Activated CD4-positive, alpha-beta memory T cell treated with anti-CD3 and anti-CD28 coated beads, Interleukin-2, amount 10 ng/mL, durations not matched to agents 7 days and 5 days (primary cell): ENCODE measurements at regions of chr12 and their contacts with region 1.

Region 1: DNA sequence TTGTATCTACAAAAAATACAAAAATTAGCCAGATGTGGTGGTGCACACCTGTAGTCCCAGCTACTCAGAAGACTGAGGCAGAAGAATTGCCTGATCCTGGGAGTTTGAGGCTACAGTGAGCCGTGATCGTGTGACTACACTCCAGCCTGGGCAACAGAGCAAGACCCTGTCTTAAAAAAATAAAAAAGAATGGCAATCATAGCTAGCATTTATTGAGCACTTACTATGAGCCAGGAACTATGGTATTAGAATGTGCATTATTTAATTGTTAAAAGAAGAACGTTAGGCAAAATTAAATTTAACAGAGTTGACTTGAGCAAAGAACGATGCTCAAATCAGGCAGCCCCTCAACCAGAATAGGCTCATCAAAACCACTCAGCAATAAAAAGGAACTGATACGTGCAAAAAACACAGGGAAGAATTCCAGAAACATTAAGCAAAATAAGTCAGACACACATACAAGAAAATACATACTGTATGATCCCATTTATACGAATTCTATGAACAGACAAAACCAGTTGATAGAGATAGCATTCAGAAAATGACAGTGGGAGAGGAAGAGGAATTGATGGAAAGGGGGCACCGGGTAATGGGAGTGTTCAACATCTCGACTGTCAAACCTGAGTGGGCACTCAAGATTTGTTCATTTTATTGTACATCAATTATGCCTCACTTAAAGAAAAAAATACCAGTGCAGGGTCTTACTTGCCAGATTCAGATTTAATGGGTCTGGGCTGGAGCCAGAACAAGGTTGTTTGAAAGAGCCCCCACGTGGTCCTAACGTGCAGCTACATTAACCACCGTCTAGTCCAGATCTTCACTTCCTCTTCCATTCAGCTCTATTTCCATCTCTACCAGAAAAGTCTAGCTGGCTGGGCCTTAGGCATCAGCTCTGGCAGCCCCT is 8.0 kb downstream of the SCNN1A start:
- DNase-seq: peak; percentile 45
- H3K4me3 Mint-ChIP-seq: no peak overlapping the region
- H3K27ac Mint-ChIP-seq: peak overlapping the region; percentile 26
- H3K4me1 Mint-ChIP-seq: peaks cover 33% of the 10 kb centered on the region
- H3K27me3 Mint-ChIP-seq: no peaks in the 10 kb centered on the region

Region 2: DNA sequence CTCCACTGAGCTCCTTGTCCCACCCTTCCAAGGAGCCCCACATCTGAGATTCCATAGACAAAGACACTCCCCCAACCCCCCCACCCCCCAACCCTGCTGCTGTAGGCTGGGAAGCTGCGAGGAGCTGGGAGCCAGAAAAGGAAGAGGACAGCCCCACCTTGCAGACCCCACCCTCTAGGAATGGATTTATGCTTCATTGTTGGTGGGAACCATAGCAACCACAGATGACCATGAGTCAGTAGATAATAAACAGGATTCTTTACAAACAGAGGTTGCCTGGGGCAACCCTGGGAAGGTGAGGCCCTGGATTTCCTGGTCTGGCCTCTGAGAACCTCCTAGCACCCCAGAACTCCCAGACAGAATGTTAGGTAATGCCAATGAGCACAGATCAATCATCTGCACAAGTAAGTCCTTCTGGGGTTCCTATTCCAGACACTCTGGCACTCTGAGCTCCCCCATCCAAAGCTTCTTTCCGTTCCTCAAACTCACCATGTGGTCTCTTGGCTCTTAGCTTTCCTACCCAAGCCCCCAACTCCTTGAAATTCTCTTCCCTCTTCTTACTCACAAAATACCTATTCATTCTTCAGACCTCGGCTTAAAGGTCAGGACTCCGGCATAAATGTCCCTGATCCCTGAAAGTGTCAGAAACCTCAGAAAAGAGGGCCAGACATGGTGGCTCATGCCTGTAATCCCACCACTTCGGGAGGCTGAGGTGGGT is 72.1 kb before region 1 on chr12:
- CTCF ChIA-PET with region 1: no interaction called
- POLR2A ChIA-PET with region 1: no interaction called
- DNase-seq: no peak
- H3K4me3 Mint-ChIP-seq: no peak overlapping the region
- H3K27ac Mint-ChIP-seq: no peak overlapping the region
- H3K4me1 Mint-ChIP-seq: no peaks in the 10 kb centered on the region
- H3K27me3 Mint-ChIP-seq: peaks cover 6% of the 10 kb centered on the region

Region 3: DNA sequence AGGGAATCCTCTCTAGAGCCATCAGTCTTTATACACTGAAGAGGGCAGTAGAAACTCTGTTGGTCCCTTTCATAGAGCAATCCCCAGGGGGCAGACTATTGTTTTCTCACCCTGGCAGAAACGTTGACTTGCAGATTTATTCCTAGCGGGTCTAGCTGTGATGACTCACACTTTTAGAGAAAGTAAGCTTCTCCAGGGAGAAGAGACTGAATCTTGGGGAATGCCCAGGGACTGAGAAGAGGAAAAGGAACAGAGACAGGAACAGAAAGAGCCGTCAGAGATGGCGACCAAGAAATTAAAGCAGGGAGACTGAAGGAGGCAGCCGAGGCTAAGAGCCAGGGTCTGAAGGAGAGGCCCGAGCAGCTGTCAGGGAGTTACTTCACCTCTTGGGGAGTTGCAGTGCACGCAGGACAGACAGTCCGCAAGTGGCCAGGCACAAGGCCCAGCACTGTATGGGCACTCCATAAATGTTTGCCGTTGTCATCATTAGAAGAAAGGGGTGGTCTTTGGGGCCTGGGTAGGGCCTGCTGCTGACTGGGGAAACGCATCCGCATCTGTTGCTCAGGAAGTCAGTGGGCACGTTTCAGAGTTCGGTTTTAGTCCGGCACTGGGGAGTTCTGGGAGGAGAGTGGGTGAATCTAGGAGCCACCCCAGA is 43.9 kb before region 1 on chr12:
- CTCF ChIA-PET with region 1: interaction called, 17 read pairs
- POLR2A ChIA-PET with region 1: interaction called, 7 read pairs
- DNase-seq: peak; percentile 46
- H3K4me3 Mint-ChIP-seq: peak overlapping the region; percentile 9
- H3K27ac Mint-ChIP-seq: peak overlapping the region; percentile 73
- H3K4me1 Mint-ChIP-seq: peaks cover 41% of the 10 kb centered on the region
- H3K27me3 Mint-ChIP-seq: peaks cover 3% of the 10 kb centered on the region

Region 4: DNA sequence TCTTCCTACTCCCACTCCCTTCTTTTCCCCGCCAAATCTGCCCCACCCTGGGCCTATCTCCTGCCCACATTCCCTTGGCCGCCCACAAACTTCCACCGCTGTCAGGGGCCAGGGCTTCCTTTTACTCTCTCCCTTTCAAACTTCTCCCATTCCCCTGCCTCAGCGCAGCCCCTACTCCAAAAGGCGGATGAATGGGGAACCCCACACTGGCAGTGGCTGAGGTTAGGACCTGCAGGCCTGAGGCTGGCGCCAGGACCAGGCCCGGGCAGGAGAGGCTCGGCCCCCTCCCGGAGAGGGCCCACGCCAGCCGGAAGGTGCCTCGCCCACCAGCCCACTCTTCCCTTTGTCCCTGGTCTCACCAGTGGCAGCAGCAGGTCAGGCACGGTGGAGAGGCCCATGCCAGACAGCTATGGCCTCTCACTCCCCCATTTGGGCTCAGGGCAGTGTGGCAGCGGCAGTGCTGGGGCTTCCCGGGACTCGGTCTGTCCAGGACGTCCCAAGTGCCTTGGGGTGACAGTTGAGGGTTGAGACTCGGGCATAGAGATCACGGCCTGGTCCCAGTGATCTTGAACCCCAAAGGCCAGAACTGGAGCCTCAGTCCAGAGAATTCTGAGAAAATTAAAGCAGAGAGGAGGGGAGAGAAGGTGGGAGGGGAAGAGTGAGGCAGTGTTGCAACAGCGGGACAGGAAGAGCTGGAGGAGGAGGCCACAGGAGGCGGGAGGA is 25.7 kb before region 1 on chr12 and contains the start of gene TNFRSF1A:
- CTCF ChIA-PET with region 1: interaction called, 71 read pairs
- POLR2A ChIA-PET with region 1: interaction called, 27 read pairs
- DNase-seq: peak; percentile 54
- H3K4me3 Mint-ChIP-seq: no peak within 1 kb of the TSS
- H3K27ac Mint-ChIP-seq: peak within 1 kb of the TSS; percentile 50
- H3K4me1 Mint-ChIP-seq: peaks cover 40% of the 10 kb centered on the region
- H3K27me3 Mint-ChIP-seq: no peaks in the 10 kb centered on the region
- total RNA-seq, gene TNFRSF1A: 61.5 to 61.9 TPM